ENCODE measurements at regions of chr4 and their contacts with region 1.

Region 1: GRCh38 chr4:173494013-173494970 is 35.7 kb downstream of the HAND2 start:
- DNase-seq: peak; percentile 65 to 68
- H3K4me3 ChIP-seq: peak overlapping the region in 2 of 3 donors; percentile 20 to 22
- H3K27ac ChIP-seq: no peak overlapping the region
- H3K4me1 ChIP-seq: peaks cover 0 to 11% of the 10 kb centered on the region in 2 donors
- H3K27me3 ChIP-seq: no peaks in the 10 kb centered on the region
- CTCF ChIP-seq: peak in 5 of 6 experiments; percentile 42 to 78 (median 72)
- POLR2A ChIP-seq: no peak

Region 2: GRCh38 chr4:173318648-173319211 is 175.6 kb before region 1 on chr4:
- intact Hi-C with region 1: loop called (anchors 10 kb)
- DNase-seq: no peak
- H3K4me3 ChIP-seq: no peak overlapping the region
- H3K27ac ChIP-seq: no peak overlapping the region
- H3K4me1 ChIP-seq: no peaks in the 10 kb centered on the region
- H3K27me3 ChIP-seq: no peaks in the 10 kb centered on the region
- CTCF ChIP-seq: peak in 3 of 6 experiments; percentile 28 to 53 (median 52)
- POLR2A ChIP-seq: no peak

Region 3: DNA sequence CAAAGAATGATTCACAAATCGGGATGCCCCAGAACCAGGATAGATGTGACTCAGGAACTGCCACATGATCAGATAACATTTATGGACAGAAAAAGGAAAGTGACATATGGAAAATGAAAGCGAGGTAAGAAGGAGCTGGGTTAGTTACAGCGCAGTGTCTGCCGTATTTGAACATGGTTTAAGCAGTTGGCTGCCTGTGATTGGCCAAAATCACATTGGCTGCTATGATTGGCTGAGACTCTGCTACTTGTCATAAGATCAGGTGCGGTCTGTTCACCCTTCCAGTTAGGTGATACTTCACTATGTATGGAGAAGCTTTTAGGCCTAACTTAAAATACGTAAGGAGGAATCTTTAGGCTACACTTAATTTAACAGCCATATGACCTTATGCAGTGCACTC is 358.5 kb after region 1 on chr4:
- intact Hi-C with region 1: no loop called
- DNase-seq: no peak
- H3K4me3 ChIP-seq: no peak overlapping the region
- H3K27ac ChIP-seq: no peak overlapping the region
- H3K4me1 ChIP-seq: no peaks in the 10 kb centered on the region
- H3K27me3 ChIP-seq: no peaks in the 10 kb centered on the region
- CTCF ChIP-seq: no peak
- POLR2A ChIP-seq: no peak